ENCODE measurements at regions of chr3 and their contacts with region 1.

Region 1: DNA sequence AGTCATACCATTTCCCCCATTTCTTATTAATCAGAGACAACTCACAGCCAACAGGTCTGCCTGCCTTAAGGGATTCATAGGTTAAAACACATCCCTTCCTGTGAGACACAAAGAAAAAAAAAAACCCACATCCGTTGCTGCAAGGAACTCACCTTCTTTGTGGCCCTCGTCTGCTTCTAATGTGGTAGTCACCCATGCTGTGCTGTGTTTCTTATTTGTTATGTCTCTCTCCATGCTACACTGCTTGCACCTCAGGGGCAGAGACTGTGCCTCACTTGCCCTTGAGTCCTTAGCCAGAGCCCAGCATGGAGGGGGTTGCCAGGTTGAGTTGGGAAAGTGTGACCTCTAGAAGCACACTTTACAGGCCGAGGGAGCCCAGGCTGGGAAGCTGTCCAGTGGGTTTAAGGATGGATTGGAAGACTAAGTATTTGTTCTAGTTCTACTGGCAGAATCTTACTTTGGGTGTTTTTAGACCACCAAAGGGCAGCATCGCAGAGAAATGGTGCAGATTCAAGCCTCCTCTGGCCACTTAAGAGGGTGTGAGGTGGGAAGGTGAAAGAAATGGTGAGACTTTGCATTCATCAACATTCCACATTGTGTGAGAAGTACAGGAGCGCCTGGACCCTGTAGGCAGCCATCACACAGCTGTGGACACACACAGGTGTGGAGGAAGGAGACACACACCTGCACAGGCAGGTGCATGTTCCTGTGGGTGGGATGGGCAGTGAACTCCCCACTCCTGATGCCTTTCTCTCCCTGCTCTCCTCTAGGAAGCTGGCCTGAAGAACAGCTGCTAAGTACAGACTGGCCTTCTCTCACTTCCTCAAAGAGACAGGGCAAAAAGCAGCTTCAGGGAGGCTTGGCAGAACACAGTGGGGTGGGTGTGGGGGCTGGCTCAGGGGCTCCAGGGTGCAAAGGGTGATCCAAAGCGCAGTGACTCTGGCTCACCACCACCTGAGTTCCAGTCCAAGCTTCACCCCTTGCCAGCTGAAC is 48.8 kb downstream of the GLB1 start:
- DNase-seq: peak; percentile 68
- H3K4me3 Mint-ChIP-seq: peak overlapping the region; percentile 60
- H3K27ac Mint-ChIP-seq: peak overlapping the region; percentile 98
- H3K4me1 Mint-ChIP-seq: peaks cover 82% of the 10 kb centered on the region
- H3K27me3 Mint-ChIP-seq: no peaks in the 10 kb centered on the region

Region 2: DNA sequence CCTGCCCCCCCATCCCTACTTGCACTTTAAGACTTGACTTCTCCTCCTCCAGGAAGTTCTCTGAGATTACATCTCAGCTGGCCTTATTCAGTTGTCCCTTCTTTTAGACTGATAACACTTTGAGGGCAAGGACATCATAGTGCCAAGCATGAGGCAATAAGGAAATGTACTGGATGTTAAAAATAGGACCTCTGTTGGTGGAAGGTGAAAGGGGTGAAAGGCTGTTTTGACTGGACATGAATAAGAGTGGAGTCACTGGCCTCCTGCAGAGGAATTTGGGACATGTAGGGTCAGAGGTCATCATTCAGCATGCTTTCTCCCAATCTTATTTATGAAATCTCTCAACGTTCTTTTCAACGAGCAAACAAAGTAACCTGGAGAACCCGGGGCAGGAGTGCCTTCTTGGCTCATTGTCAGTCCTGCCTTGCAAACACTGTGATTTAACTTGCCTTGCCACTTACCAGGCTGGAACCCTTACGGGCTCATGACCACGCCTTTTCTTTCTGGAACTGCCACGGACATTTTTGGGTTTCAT is 191.7 kb before region 1 on chr3:
- CTCF ChIA-PET with region 1: no interaction called
- POLR2A ChIA-PET with region 1: no interaction called
- DNase-seq: no peak
- H3K4me3 Mint-ChIP-seq: no peak overlapping the region
- H3K27ac Mint-ChIP-seq: no peak overlapping the region
- H3K4me1 Mint-ChIP-seq: no peaks in the 10 kb centered on the region
- H3K27me3 Mint-ChIP-seq: peaks cover 16% of the 10 kb centered on the region

Region 3: DNA sequence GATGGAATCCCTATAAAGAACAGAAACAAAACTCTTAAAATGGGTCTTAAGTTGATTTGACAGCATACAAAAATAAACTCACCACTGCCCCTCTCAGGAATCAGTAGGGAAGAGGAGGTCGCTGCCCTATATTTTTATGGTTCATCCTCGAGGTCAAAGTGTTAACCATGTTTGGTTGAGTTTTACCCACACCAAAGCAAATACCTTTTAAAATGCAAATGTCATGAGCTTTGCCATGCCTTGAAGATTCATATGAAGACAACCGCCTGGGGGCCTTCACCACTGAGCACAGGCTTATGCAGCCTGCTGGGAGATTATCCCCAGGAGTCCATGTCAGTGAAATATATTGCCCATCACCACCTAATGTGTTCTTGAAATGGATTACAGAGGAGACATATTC is 17.3 kb before region 1 on chr3:
- CTCF ChIA-PET with region 1: interaction called, 100 read pairs
- POLR2A ChIA-PET with region 1: interaction called, 105 read pairs
- DNase-seq: peak; percentile 72
- H3K4me3 Mint-ChIP-seq: no peak overlapping the region
- H3K27ac Mint-ChIP-seq: peak overlapping the region; percentile 41
- H3K4me1 Mint-ChIP-seq: peaks cover 31% of the 10 kb centered on the region
- H3K27me3 Mint-ChIP-seq: no peaks in the 10 kb centered on the region

Region 4: DNA sequence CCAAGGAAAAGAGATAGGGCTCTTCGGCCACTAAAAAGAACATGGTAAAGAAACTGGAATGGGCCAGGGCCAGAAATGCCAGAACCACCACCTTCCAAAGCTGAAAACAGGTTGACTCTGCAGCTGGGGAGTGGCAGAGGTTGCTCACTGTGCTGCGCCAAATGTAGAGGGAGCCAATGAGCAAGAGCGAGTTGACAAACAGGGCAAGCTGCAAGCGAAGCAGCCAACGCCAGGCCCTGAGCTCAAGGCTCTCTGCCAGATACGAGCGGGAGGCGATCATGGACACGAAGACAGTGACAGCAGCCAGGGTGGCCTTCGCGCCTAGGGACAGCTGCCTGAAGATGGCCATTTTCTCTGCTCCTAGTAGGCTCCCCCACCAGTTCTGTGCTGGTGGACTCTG is 45.7 kb after region 1 on chr3:
- CTCF ChIA-PET with region 1: no interaction called
- POLR2A ChIA-PET with region 1: no interaction called
- DNase-seq: no peak
- H3K4me3 Mint-ChIP-seq: no peak overlapping the region
- H3K27ac Mint-ChIP-seq: no peak overlapping the region
- H3K4me1 Mint-ChIP-seq: peaks cover 59% of the 10 kb centered on the region
- H3K27me3 Mint-ChIP-seq: no peaks in the 10 kb centered on the region